SK-MEL-5 (cell line): ENCODE measurements at regions of chr2 and their contacts with region 1.

Region 1: DNA sequence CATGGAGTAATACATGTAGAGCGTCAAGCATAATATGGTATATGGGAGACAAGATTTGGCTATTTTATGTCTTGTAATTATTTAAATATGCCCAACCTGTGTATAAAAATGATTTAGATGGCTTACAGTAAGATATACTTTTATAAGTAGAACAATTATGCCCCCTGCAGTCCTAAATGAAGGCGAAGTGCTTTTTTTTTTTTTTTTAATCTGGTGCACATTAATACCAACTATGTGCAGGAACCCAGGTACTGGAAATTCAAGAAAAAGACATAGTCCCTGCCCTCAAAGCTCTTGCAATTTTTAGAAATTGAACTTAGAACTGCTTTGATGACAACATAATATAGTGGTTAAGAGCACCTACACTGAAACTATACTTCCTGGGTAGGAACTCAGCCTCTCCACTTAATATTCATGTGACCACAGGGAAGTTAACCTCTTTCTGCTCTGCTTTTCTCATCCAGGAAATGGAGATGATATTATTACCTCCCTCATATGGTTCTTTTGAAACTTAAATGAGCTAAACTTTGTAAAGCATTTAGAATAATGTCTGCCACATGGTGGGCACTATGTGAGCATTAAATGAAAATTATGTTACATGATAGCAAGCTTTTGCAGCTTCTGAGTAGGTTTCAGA is 38.1 kb downstream of the AFTPH start:
- DNase-seq: peak; percentile 62

Region 2: GRCh38 chr2:64036034-64036705 is 526.1 kb before region 1 on chr2:
- in situ Hi-C with region 1: loop called (anchors 25 kb)
- DNase-seq: no peak

Region 3: GRCh38 chr2:64330281-64331113 is 231.8 kb before region 1 on chr2:
- in situ Hi-C with region 1: loop called (anchors 10 kb)
- DNase-seq: peak; percentile 85